Cardiac septum (tissue), 1 donor: ENCODE measurements at regions of chr4 and their contacts with region 1.

Region 1: DNA sequence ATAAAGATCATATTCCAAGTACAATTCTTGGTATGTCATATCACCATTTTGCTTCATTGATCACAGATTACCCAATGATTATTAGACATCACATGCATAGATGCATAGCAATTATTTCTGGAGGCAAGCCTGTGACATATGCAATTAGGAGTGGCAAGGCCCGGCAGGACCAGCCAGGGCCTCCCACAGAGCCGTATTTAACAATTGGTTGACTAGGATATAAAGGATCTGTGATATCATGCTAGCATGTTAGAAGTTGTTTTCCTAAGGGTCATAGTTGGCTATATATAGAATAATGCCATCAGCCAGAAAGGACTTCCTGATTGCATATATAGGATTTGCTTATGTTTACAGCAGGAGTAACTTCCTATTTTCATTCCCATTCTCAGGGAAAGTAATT is 103.5 kb upstream of the OTUD4 start:
- DNase-seq: no peak

Region 2: DNA sequence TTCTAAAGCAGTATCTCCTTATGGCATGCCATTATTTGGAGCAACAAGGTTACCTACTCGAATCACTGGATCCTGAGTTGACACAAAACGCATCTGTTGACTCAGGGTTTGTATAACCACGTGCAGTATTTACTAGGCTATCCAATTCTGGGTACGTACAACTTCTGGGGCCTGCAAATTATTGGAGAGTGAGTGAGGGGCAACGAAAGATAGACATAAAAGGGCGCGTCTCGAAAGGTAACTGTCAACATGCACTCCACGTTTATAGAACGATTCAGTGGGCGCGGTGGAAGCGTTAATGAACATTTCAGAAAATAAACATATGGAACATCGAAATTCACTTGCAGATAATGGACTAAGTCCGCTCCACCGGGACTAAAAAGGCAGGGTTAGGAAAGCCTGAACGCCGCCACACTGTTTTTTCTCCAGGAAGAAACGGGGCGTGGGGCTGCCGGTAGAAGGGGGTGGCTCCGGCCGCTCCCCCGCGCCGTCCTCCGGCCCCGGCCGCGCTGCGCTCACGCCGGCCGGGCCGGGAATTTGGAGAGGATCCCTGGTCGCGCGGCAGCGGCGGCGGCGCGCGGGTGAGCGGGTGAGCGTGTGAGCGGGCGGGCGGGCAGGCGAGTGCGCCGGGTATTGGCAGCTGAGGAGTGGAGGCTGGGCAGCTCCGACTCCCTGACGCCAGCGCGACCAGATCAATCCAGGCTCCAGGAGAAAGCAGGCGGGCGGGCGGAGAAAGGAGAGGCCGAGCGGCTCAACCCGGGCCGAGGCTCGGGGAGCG is 197.4 kb after region 1 on chr4 and contains the start of gene SMAD1:
- intact Hi-C with region 1: loop called (anchors 5 kb)
- DNase-seq: peak; percentile 91
- total RNA-seq, gene SMAD1: 10.8 TPM

Region 3: GRCh38 chr4:145545538-145546174 is 261.7 kb after region 1 on chr4:
- intact Hi-C with region 1: no loop called
- DNase-seq: no peak

Region 4: GRCh38 chr4:145694929-145695328 is 411.0 kb after region 1 on chr4:
- intact Hi-C with region 1: no loop called
- DNase-seq: no peak